Dorsolateral prefrontal cortex (tissue), 120 donors: ENCODE measurements at regions of chr11 and their contacts with region 1.

Region 1: DNA sequence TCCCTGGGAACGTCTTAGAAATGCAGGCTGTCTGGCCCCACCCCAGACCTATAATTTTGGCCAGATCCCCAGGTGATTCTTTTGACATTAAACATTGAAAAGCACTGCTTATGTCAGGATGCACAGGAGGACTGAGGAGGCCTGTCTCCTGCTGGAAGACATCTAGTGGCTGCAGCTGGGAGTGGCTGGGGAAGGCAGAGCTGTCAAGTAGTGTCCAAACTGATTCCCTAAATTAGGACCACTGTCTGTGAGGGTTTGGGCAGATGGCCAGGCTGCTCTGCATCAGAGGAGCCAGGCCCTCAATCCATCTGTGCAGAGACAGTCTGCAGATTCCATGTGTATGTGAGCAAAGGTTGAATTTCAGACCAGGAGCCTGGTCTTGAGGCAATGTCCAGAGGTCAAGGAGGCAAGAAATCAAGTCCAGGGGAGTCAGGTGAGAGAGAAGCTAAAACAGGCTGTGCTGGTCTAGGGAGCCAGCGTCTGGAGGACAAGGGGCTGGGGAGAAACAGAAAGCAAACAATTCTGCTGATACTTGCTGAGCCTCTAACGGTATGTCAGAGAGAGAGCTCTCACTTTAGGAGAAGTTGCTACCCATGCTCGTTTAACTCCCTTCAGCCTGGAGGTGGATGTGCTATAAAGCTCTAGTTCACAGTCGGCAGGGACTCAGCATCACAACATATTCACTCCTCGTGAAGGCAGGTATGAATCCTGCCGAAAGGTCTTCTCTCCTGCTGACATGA is 15.3 kb upstream of the SYTL2 start:
- DNase-seq: peak in 8 of 10 donors; percentile 37 to 81 (median 54)
- H3K4me3 ChIP-seq: no peak overlapping the region
- H3K27ac ChIP-seq: peak overlapping the region in 3 of 59 donors; percentile 3 to 19 (median 5)
- H3K27me3 ChIP-seq: no peaks in the 10 kb centered on the region
- CTCF ChIP-seq: peak in 54 of 56 donors; percentile 17 to 75 (median 56)

Region 2: DNA sequence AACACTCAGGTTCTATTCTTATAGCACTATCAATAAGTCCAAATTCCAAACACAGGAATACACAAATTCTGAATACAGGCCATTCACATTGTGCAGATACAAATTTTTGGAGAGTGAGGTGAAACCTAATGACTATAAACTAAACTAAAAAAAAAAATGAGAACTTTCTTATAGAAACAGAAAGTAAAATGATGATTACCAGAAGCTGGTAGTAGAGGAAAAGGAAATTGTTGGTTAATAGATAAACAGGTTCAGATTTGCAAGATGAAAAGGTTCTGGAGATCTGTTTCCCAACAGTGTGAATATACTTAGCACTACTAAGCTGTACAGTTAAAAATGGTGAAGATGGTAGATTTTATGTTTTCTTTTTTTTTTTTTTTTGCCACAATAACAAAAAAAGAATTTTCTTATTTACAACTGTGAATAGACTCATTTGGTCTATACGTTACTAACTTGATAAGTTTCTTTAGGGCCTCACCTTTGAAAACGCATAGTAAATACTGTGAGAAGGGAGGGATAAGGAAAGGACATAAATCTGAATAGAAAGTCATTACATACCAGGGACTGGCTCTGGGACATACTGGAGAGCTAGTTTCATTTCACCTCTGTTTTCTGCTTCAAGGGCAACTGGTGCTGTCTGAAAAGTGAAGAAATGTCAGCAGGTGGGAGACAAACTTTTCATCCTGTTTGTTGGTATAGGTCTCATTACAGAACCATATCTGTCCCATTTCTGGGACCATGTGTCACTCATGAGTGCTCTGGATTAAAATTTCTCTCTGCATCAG is 126.1 kb before region 1 on chr11:
- intact Hi-C with region 1: loop called in 1 of 2 experiments (anchors 5 kb)
- DNase-seq: no peak
- H3K4me3 ChIP-seq: no peak overlapping the region
- H3K27ac ChIP-seq: no peak overlapping the region
- H3K27me3 ChIP-seq: no peaks in the 10 kb centered on the region
- CTCF ChIP-seq: no peak